Caco-2 (cell line): ENCODE measurements at regions of chr6 and their contacts with region 1.

Region 1: GRCh38 chr6:79466207-79466834 is 70.9 kb downstream of the LCA5 start:
- DNase-seq: no peak
- H3K4me3 ChIP-seq: no peak overlapping the region
- H3K4me3 Mint-ChIP-seq: no peak overlapping the region
- H3K27ac Mint-ChIP-seq: peak overlapping the region; percentile 57
- H3K4me1 ChIP-seq: peaks cover 88% of the 10 kb centered on the region
- H3K4me1 Mint-ChIP-seq: peaks cover 53% of the 10 kb centered on the region
- H3K27me3 ChIP-seq: no peaks in the 10 kb centered on the region
- H3K27me3 Mint-ChIP-seq: no peaks in the 10 kb centered on the region
- CTCF ChIP-seq: peak; percentile 35 to 51

Region 2: DNA sequence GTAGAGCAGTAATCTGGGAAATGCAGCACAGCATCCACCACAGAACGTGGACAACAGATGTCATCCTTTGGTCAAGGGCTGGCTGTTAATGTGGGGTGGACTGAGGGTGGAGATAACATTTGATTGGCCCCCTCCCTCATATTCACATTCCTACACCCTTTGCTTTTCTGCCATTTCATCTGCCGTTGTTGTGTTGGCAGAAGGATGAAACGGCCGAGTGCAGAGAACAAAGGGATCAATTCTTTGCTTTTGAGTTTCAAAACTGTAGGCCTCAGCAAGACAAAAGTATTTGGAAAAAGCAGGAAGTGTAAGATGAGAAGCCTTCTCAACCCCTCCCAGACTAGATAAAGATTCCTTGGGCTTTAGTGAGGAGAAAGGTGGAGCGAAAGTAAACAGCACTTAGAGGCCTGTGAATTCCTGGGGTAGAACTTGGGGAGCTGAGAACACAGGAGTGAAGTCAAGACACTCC is 314.0 kb before region 1 on chr6:
- CTCF ChIA-PET with region 1: no interaction called
- POLR2A ChIA-PET with region 1: no interaction called
- intact Hi-C with region 1: loop called (anchors 1 kb)
- DNase-seq: peak; percentile 77 to 86
- H3K4me3 ChIP-seq: no peak overlapping the region
- H3K4me3 Mint-ChIP-seq: no peak overlapping the region
- H3K27ac Mint-ChIP-seq: no peak overlapping the region
- H3K4me1 ChIP-seq: peaks cover 43% of the 10 kb centered on the region
- H3K4me1 Mint-ChIP-seq: peaks cover 10% of the 10 kb centered on the region
- H3K27me3 ChIP-seq: no peaks in the 10 kb centered on the region
- H3K27me3 Mint-ChIP-seq: no peaks in the 10 kb centered on the region
- CTCF ChIP-seq: peak in 1 of 2 experiments; percentile 2

Region 3: GRCh38 chr6:79233611-79234149 is 232.6 kb before region 1 on chr6:
- CTCF ChIA-PET with region 1: no interaction called
- POLR2A ChIA-PET with region 1: no interaction called
- intact Hi-C with region 1: loop called (anchors 2 kb)
- DNase-seq: peak; percentile 89
- H3K4me3 ChIP-seq: peak overlapping the region; percentile 66
- H3K4me3 Mint-ChIP-seq: peak overlapping the region; percentile 85
- H3K27ac Mint-ChIP-seq: peak overlapping the region; percentile 86
- H3K4me1 ChIP-seq: peaks cover 34% of the 10 kb centered on the region
- H3K4me1 Mint-ChIP-seq: peaks cover 34% of the 10 kb centered on the region
- H3K27me3 ChIP-seq: no peaks in the 10 kb centered on the region
- H3K27me3 Mint-ChIP-seq: no peaks in the 10 kb centered on the region
- CTCF ChIP-seq: peak in 1 of 2 experiments; percentile 48

Region 4: DNA sequence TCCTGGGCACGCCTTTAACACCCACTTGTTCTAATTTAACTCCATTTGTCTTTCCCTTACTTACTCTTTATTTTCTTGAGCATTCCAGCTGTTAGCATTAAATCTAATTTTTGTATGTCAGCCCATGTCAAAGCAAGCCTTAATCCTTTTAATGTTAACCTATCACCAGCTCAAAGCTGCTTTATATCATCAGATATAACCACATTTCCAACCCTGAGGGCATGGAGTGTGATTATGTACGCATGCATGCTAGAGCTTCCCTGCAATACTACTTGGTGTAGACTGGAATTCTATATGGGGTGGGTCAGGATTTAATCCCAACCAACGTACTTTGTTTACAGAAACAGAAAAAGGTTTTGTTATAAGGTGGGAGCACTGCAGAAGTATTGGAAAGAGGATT is 92.4 kb before region 1 on chr6:
- CTCF ChIA-PET with region 1: no interaction called
- POLR2A ChIA-PET with region 1: no interaction called
- intact Hi-C with region 1: loop called (anchors 2 kb)
- DNase-seq: no peak
- H3K4me3 ChIP-seq: no peak overlapping the region
- H3K4me3 Mint-ChIP-seq: peak overlapping the region; percentile 10
- H3K27ac Mint-ChIP-seq: peak overlapping the region; percentile 30
- H3K4me1 ChIP-seq: peaks cover 36% of the 10 kb centered on the region
- H3K4me1 Mint-ChIP-seq: peaks cover 18% of the 10 kb centered on the region
- H3K27me3 ChIP-seq: no peaks in the 10 kb centered on the region
- H3K27me3 Mint-ChIP-seq: no peaks in the 10 kb centered on the region
- CTCF ChIP-seq: no peak

Region 5: DNA sequence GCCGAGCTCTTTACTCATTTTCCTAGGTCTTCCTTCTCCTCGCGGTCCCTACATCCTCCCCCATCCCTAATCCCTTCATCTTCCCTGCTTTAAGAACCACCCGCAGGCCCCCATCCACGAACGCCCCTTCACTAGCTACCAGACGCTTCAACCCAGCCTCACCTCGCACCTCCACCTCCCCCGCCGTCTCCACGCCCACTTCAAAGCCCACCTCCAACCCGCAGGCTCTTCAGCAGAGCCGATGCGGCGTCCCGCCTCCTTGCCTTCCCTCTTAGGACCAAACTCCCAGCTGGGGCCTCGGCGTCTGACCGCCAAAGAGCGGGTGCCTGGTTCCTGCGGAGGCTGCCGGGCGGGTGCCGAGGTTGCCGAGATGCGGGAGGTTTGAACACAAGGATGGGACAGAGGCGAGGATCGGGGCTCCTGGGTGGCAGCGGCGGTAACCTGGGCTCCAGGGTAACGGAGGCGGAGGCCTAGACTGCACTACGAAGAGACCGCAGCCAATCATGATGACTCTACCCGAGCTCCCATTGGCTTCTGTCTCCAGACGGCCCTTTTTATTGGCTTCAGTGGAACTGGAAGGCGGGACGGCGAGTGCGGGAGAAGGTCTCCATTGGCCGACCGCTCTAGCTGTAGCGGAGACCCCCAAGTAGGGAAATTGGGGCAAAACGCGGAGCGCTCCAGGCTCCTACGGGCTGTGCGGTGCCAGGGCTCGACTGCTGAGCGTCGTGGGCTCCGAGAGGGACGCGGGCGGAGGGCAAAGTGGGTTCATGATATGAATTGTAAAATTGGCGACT is 70.8 kb after region 1 on chr6 and contains the start of gene LCA5:
- CTCF ChIA-PET with region 1: no interaction called
- POLR2A ChIA-PET with region 1: interaction called, 7 read pairs
- intact Hi-C with region 1: loop called (anchors 2 kb)
- DNase-seq: peak; percentile 94 to 97
- H3K4me3 ChIP-seq: peak within 1 kb of the TSS; percentile 75
- H3K4me3 Mint-ChIP-seq: no peak within 1 kb of the TSS
- H3K27ac Mint-ChIP-seq: no peak within 1 kb of the TSS
- H3K4me1 ChIP-seq: peaks cover 36% of the 10 kb centered on the region
- H3K4me1 Mint-ChIP-seq: peaks cover 17% of the 10 kb centered on the region
- H3K27me3 ChIP-seq: no peaks in the 10 kb centered on the region
- H3K27me3 Mint-ChIP-seq: no peaks in the 10 kb centered on the region
- CTCF ChIP-seq: no peak
- total RNA-seq, gene LCA5: 10.9 and 12.2 TPM in 2 replicates